ENCODE measurements at regions of chr20 and their contacts with region 1.

Region 1: GRCh38 chr20:57709931-57710799 is at the start of gene PMEPA1:
- DNase-seq: peak; percentile 92 to 94
- ATAC-seq: peak; percentile 74 to 78
- H3K4me3 ChIP-seq: peak within 1 kb of the TSS; percentile 62 to 84 (median 73)
- H3K27ac ChIP-seq: peak within 1 kb of the TSS; percentile 83 to 94 (median 91)
- H3K4me1 ChIP-seq: peaks cover 53% of the 10 kb centered on the region in 2 donors
- H3K27me3 ChIP-seq: no peaks in the 10 kb centered on the region
- CTCF ChIP-seq: peak in 2 of 5 experiments; percentile 7 to 36
- POLR2A ChIP-seq: peak; percentile 85 to 94
- total RNA-seq, gene PMEPA1: 1.5 to 8.1 (median 5.8) TPM

Region 2: DNA sequence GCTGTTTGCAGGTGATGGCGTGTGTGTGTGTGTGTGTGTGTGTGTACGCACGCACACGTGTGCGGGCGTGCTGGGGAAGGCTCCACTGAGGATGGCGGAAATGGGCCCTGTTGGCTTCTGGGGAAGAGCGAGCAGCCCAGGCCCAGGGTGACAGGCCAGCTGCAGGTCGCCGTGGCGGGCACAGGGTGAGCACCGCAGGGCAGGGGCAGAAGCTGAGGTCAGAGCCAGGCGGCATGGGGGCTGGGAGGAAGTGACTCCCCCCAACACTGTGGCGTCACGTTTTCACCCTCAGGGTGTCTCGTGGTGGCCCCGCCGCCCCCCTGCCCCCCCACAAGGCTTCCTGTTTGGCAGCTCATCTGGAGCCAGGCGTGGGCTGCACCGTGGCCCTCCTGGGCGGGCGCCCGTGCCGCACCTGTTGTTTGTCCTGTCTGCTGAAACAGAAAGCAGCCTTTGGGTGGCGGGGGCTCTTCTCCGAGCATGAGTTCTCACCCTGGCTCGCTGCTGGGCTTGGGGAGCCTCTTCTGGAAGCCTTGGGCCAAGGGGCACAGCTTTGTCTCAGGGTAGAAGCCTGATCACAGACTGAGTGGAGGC is 311.8 kb before region 1 on chr20:
- in situ Hi-C with region 1: loop called in 1 of 4 experiments (anchors 25 kb)
- intact Hi-C with region 1: loop called (anchors 1 kb)
- DNase-seq: peak; percentile 78 to 92
- ATAC-seq: peak; percentile 39 to 42
- H3K4me3 ChIP-seq: peak overlapping the region; percentile 11 to 35 (median 30)
- H3K27ac ChIP-seq: peak overlapping the region; percentile 96 to 99 (median 98)
- H3K4me1 ChIP-seq: peaks cover 79 to 97% of the 10 kb centered on the region in 2 donors
- H3K27me3 ChIP-seq: no peaks in the 10 kb centered on the region
- CTCF ChIP-seq: no peak
- POLR2A ChIP-seq: peak; percentile 52 to 70

Region 3: GRCh38 chr20:57748601-57749130 is 38.5 kb after region 1 on chr20:
- in situ Hi-C with region 1: no loop called
- intact Hi-C with region 1: loop called (anchors 2 kb)
- DNase-seq: peak; percentile 43 to 69
- ATAC-seq: peak; percentile 62 to 76
- H3K4me3 ChIP-seq: peak overlapping the region; percentile 40 to 71 (median 52)
- H3K27ac ChIP-seq: peak overlapping the region; percentile 21 to 58 (median 48)
- H3K4me1 ChIP-seq: peaks cover 20 to 22% of the 10 kb centered on the region in 2 donors
- H3K27me3 ChIP-seq: no peaks in the 10 kb centered on the region
- CTCF ChIP-seq: peak in 1 of 5 experiments; percentile 11
- POLR2A ChIP-seq: no peak

Region 4: GRCh38 chr20:57794600-57795341 is 84.6 kb after region 1 on chr20:
- in situ Hi-C with region 1: no loop called
- intact Hi-C with region 1: no loop called
- DNase-seq: no peak
- ATAC-seq: no peak
- H3K4me3 ChIP-seq: no peak overlapping the region
- H3K27ac ChIP-seq: no peak overlapping the region
- H3K4me1 ChIP-seq: no peaks in the 10 kb centered on the region
- H3K27me3 ChIP-seq: no peaks in the 10 kb centered on the region
- CTCF ChIP-seq: no peak
- POLR2A ChIP-seq: no peak